Calu3 (cell line): ENCODE measurements at regions of chr20 and their contacts with region 1.

Region 1: DNA sequence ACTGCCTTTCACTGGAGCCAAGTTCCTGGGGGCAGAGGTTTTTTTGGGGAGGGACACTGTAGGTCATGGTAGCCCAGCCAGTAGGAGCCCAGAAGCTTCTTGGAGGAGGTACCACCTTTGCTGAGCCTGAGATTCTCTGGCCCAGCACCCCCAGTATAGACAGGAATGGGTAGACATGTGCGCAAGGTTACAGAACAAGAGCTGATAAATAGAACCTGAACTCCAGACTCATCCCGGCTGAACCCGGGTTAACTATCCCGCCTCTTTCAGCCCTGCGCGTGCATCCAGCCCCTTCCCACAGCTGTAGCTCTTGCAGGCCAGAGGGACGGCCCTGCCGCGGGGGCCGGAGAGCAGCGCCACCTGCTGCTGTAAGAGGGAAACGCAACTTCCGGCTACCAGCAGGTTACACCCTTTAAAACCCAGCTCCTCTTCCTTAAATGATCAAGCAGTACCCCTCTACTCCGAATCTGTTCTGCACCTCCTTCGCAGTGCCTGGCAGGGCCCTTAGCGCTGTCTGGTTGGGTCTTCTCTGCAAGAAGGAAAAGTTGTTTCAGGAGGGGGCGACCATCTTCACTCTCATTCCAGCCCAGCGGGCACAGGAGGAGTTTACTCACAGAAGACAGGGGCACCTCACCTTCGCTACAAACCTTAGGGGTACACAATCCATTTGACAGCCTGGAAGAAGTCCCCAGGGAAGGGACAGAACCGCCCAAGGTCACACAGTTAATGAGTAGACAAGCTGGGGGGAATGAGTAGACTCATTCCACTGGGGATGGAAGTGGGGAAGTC is 7.5 kb downstream of the SRXN1 start:
- DNase-seq: peak; percentile 76
- H3K4me3 Mint-ChIP-seq: no peak overlapping the region
- H3K27ac Mint-ChIP-seq: no peak overlapping the region
- H3K4me1 Mint-ChIP-seq: no peaks in the 10 kb centered on the region
- H3K27me3 Mint-ChIP-seq: peaks cover 4% of the 10 kb centered on the region
- CTCF ChIP-seq: peak; percentile 81

Region 2: GRCh38 chr20:354298-355064 is 291.0 kb before region 1 on chr20:
- CTCF ChIA-PET with region 1: interaction called, 3 read pairs
- intact Hi-C with region 1: loop called (anchors 10 kb)
- DNase-seq: peak; percentile 77
- H3K4me3 Mint-ChIP-seq: no peak overlapping the region
- H3K27ac Mint-ChIP-seq: no peak overlapping the region
- H3K4me1 Mint-ChIP-seq: peaks cover 10% of the 10 kb centered on the region
- H3K27me3 Mint-ChIP-seq: no peaks in the 10 kb centered on the region
- CTCF ChIP-seq: peak; percentile 81

Region 3: DNA sequence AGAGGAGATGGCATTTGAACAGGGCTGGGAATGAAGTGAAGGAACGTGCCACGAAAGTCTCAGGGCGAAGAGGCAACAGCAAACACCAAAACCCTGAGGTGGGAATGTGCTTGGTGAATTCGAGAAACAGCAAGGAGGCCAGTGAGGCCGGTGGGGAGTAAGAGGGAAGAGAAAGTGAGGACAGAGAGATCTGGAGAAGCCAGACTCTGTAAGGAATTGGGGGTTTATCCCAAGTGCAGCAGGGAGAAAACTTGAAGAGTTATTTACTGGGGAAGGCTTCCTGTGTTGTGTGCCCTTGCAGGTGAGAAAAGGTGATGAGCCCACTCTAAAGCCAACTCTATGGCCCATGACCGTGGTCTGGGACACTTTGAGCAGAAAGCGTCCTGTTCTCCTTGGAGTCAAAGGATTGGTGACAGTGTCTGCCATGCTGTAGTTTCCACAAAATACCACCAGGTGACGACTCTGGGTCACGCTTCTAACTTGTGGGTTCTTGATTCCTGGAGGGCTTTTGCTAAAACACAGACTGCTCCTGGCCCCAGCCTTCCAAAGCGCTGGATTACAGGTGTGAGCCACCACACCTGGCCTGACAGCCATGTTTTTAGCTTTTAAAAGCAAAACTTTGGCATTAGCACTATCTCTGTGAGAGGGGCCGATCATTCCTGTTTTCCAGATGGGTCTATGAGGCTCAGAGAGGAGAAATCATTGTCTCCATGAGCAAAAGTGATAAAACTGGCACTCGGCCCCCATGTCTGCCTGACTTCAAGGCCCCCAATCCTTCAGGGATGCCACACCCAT is 83.9 kb before region 1 on chr20:
- CTCF ChIA-PET with region 1: interaction called, 8 read pairs
- intact Hi-C with region 1: loop called (anchors 1 kb)
- DNase-seq: peak; percentile 70
- H3K4me3 Mint-ChIP-seq: no peak overlapping the region
- H3K27ac Mint-ChIP-seq: no peak overlapping the region
- H3K4me1 Mint-ChIP-seq: no peaks in the 10 kb centered on the region
- H3K27me3 Mint-ChIP-seq: peaks cover 40% of the 10 kb centered on the region
- CTCF ChIP-seq: peak; percentile 78

Region 4: GRCh38 chr20:625360-625932 is 20.1 kb before region 1 on chr20:
- CTCF ChIA-PET with region 1: no interaction called
- intact Hi-C with region 1: no loop called
- DNase-seq: no peak
- H3K4me3 Mint-ChIP-seq: no peak overlapping the region
- H3K27ac Mint-ChIP-seq: no peak overlapping the region
- H3K4me1 Mint-ChIP-seq: no peaks in the 10 kb centered on the region
- H3K27me3 Mint-ChIP-seq: peaks cover 84% of the 10 kb centered on the region
- CTCF ChIP-seq: no peak